H1 (cell line): ENCODE measurements at regions of chr12 and their contacts with region 1.

Region 1: DNA sequence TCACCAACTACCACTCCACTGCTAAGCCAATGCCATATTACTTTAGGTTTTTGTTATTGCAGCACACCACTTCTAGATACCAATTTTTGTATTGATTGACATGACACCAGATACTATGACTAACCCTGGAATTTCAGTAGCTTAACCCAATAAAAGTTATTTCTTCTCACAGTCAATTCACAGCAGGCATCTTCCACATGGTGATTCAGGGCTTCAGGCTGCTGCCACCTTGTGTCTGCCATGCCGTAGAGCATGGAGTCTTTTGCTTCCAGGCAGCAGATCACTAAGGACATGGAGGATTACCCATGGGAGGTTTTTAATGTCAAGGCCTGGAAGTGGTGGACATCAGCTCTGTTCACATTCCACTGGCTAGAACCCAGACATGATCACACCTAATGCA is 56.4 kb upstream of the LTA4H start:
- DNase-seq: no peak
- H3K4me3 ChIP-seq: no peak overlapping the region
- H3K27ac ChIP-seq: no peak overlapping the region
- H3K4me1 ChIP-seq: peaks cover 0 to 8% (median 3%) of the 10 kb centered on the region in 4 experiments; a peak in 4 of 7 replicates
- H3K27me3 ChIP-seq: no peaks in the 10 kb centered on the region
- CTCF ChIP-seq: peak; percentile 45 to 68 (median 66)
- EP300 ChIP-seq: no peak
- POLR2A ChIP-seq: no peak
- RAD21 ChIP-seq: peak; percentile 51 to 55

Region 2: DNA sequence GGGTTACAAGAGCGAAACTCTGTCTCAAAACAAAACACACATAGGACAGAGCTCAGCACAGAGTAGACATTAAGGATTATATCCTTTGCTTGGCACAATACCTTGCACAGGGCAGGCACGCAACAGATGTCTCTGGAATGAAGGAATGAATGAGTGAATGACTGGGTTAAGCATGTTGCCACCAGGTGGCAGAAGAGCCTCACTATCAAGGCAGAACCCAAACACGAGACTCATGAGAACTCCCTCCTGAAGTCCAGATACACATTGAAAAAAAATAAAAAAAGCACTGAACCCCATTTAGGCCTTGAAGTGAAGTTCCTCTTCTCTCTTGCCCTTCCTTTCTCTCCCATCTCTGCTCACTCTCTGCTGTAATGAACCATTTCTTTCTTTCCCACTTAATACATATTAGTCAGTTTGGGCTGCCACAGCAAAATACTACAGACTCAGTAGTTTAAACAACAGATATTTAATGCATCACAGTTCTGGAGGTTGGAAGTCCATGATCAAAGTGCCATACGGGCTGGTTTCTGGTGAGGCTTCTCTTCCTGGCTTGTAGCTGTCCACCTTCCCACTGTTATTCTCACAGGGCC is 29.9 kb before region 1 on chr12:
- CTCF ChIA-PET with region 1: interaction called, 21 read pairs
- POLR2A ChIA-PET with region 1: no interaction called
- DNase-seq: peak; percentile 39 to 72
- H3K4me3 ChIP-seq: no peak overlapping the region
- H3K27ac ChIP-seq: no peak overlapping the region
- H3K4me1 ChIP-seq: peaks cover 0 to 8% (median 0%) of the 10 kb centered on the region in 4 experiments; a peak in 3 of 7 replicates
- H3K27me3 ChIP-seq: no peaks in the 10 kb centered on the region
- CTCF ChIP-seq: peak; percentile 50 to 87 (median 79)
- EP300 ChIP-seq: no peak
- POLR2A ChIP-seq: no peak
- RAD21 ChIP-seq: peak; percentile 95 to 96

Region 3: GRCh38 chr12:96070670-96071279 is 21.1 kb before region 1 on chr12:
- CTCF ChIA-PET with region 1: interaction called, 21 read pairs
- POLR2A ChIA-PET with region 1: no interaction called
- DNase-seq: peak in 1 of 2 experiments; percentile 54
- H3K4me3 ChIP-seq: no peak overlapping the region
- H3K27ac ChIP-seq: no peak overlapping the region
- H3K4me1 ChIP-seq: peaks cover 0 to 8% (median 3%) of the 10 kb centered on the region in 4 experiments; a peak in 3 of 7 replicates
- H3K27me3 ChIP-seq: no peaks in the 10 kb centered on the region
- CTCF ChIP-seq: peak in 2 of 3 experiments; percentile 34 to 60; a peak in 3 of 4 replicates
- EP300 ChIP-seq: no peak
- POLR2A ChIP-seq: no peak
- RAD21 ChIP-seq: peak; percentile 39 to 44

Region 4: DNA sequence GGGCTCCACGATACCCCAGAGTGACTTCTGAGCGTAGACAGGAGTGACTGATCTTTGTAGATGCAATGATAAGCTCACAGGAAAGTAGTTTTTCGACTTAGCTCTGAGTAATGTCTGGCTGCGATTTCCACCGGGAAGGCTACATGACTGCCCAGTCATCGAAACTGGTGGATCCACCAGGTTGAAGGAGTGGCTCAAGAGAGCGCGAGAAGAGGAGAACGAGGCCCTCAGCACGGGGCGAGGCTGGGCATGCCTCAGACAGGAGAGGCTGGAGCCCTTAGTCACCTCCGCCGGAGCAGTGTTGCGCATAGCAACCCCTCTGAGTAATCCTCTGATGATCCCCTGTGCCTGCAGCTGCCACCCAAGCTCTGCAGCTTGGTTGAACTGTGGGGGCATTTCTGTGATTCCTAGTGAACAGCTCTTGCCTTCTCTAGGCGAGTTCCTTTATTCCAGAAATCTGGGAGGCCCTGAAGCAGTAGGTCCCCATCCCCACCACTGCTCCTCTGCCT is 127.9 kb after region 1 on chr12:
- CTCF ChIA-PET with region 1: interaction called, 10 read pairs
- POLR2A ChIA-PET with region 1: no interaction called
- DNase-seq: peak in 1 of 2 experiments; percentile 53
- H3K4me3 ChIP-seq: no peak overlapping the region
- H3K27ac ChIP-seq: no peak overlapping the region
- H3K4me1 ChIP-seq: peaks cover 0 to 12% (median 2%) of the 10 kb centered on the region in 4 experiments; a peak in 3 of 7 replicates
- H3K27me3 ChIP-seq: no peaks in the 10 kb centered on the region
- CTCF ChIP-seq: no peak
- EP300 ChIP-seq: no peak
- POLR2A ChIP-seq: no peak
- RAD21 ChIP-seq: no peak